ENCODE measurements at regions of chr10 and their contacts with region 1.

Region 1: GRCh38 chr10:23994479-23995046 is 214.4 kb upstream of the KIAA1217 start:
- DNase-seq: peak; percentile 15 to 52
- ATAC-seq: peak; percentile 66 to 78; a peak in 5 of 6 replicates
- H3K4me3 ChIP-seq: no peak overlapping the region
- H3K27ac ChIP-seq: no peak overlapping the region
- H3K4me1 ChIP-seq: no peaks in the 10 kb centered on the region
- CTCF ChIP-seq: peak; percentile 60
- EP300 ChIP-seq: no peak
- POLR2A ChIP-seq: no peak
- RAD21 ChIP-seq: peak; percentile 62 to 83

Region 2: GRCh38 chr10:24010436-24010970 is 15.9 kb after region 1 on chr10:
- CTCF ChIA-PET with region 1: interaction called, 20 read pairs
- POLR2A ChIA-PET with region 1: no interaction called
- DNase-seq: no peak
- ATAC-seq: no peak
- H3K4me3 ChIP-seq: no peak overlapping the region
- H3K27ac ChIP-seq: no peak overlapping the region
- H3K4me1 ChIP-seq: no peaks in the 10 kb centered on the region
- CTCF ChIP-seq: no peak
- EP300 ChIP-seq: no peak
- POLR2A ChIP-seq: no peak
- RAD21 ChIP-seq: no peak

Region 3: DNA sequence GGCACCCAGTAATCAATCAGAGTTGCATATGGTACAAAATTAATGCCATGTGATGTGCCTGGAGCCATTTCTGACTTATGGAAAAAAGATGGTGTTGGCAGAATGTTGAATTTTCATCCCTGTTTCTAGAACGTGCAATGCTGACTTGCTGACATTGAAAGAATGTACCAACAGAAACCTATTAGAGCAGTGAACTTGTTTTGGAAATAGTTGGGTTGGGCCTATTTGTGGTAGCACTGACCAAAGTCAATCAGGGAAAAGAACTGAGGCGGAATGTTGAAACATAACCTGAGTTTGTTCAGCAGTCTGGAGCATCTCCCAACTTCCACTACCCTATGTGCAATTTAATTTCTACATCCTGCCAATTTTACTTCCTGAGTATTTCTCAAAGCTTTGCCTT is 202.7 kb after region 1 on chr10:
- CTCF ChIA-PET with region 1: interaction called, 21 read pairs
- POLR2A ChIA-PET with region 1: no interaction called
- DNase-seq: no peak
- ATAC-seq: no peak
- H3K4me3 ChIP-seq: no peak overlapping the region
- H3K27ac ChIP-seq: no peak overlapping the region
- H3K4me1 ChIP-seq: no peaks in the 10 kb centered on the region
- CTCF ChIP-seq: no peak
- EP300 ChIP-seq: no peak
- POLR2A ChIP-seq: no peak
- RAD21 ChIP-seq: no peak

Region 4: DNA sequence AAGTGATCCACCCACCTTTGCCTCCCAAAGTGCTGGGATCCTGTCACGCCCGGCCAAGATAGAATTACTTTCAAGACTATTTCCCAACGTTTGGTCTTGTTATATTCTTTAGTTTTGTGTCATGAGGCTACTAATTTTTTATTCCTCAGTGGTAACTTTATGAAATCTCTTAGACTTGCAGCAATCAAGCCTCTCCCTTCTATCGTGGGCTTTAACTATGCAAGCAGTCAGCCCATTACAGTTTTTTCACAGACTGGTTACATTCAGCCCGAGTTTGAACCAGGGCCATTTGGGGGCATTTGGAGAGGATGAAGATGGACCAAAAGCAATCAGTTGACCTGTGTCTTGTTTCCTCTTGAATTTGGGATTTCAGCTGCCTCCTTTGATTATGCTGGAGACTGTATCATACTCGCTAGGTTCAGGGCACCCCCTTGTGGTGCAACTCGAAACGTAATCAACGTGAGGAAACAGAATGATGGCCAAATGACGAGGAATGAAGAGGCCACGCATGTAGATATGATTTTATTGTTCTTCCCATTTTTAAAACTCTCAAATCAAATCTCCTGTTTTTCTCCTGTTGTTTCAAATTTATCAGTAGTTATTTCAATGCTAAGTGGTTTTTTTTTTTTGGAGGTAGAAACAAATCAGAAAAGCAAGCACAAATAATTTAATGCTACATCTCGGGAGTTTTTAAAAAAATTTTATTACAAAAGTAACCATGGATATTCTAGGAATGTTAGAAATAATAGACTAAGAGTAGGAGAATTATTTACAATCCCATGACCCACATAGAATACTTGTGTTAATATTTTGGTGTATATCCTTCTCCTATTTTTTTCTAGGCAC is 365.9 kb after region 1 on chr10:
- CTCF ChIA-PET with region 1: interaction called, 28 read pairs
- POLR2A ChIA-PET with region 1: no interaction called
- DNase-seq: peak; percentile 35 to 64
- ATAC-seq: peak; percentile 81 to 93; a peak in 5 of 6 replicates
- H3K4me3 ChIP-seq: no peak overlapping the region
- H3K27ac ChIP-seq: no peak overlapping the region
- H3K4me1 ChIP-seq: no peaks in the 10 kb centered on the region
- CTCF ChIP-seq: peak; percentile 61
- EP300 ChIP-seq: no peak
- POLR2A ChIP-seq: no peak
- RAD21 ChIP-seq: peak; percentile 67 to 77

Region 5: DNA sequence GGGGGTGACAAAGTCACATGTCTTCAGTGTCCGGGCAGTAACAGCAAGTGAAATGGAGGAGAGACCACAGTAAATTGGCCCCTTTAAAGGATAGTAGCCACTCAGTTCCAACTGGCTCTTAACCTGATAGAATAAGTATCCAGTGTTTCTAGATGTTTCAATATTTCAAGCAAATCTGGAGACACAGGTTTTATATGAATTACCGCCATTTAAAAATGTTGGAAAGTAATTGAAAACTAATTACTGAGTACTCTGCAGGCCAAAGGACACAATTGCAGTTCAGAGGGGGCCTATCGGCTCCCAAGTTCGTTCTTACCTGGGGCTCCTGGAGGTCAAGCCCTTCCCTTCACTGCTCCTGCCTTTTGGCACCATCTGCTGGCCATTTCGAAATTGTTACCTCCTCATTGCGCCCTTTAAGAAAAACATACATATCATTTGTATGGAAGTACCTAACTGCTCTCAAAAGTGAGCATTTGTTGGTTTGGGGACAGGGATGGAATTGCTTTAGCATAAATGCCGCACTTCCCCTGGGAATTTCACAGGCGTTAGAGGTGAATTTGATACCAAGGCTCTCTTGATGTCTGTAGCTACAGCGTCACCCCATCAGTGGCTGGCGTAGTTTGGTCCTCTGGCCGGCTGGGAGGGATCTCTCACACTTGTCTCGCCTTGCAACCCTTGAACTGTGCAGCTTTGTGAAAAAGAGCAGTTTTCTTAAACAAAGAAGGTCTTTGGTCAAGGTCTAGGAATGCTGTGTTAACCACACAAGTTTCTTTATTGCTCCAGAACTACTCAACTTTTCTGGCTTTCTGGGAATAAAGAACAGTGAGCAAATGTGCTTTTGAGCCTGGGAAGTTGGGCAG is 509.1 kb after region 1 on chr10:
- CTCF ChIA-PET with region 1: interaction called, 26 read pairs
- POLR2A ChIA-PET with region 1: no interaction called
- DNase-seq: peak; percentile 34 to 75
- ATAC-seq: peak; percentile 90 to 93
- H3K4me3 ChIP-seq: no peak overlapping the region
- H3K27ac ChIP-seq: no peak overlapping the region
- H3K4me1 ChIP-seq: no peaks in the 10 kb centered on the region
- CTCF ChIP-seq: peak; percentile 90
- EP300 ChIP-seq: no peak
- POLR2A ChIP-seq: no peak
- RAD21 ChIP-seq: peak; percentile 93 to 94

Region 6: GRCh38 chr10:24518981-24519597 is 524.5 kb after region 1 on chr10:
- CTCF ChIA-PET with region 1: interaction called, 37 read pairs
- POLR2A ChIA-PET with region 1: no interaction called
- DNase-seq: peak; percentile 57 to 67
- ATAC-seq: peak; percentile 83 to 93
- H3K4me3 ChIP-seq: no peak overlapping the region
- H3K27ac ChIP-seq: no peak overlapping the region
- H3K4me1 ChIP-seq: no peaks in the 10 kb centered on the region
- CTCF ChIP-seq: peak; percentile 82
- EP300 ChIP-seq: no peak
- POLR2A ChIP-seq: no peak
- RAD21 ChIP-seq: peak; percentile 82 to 83

Region 7: GRCh38 chr10:24556750-24557742 is 562.5 kb after region 1 on chr10:
- CTCF ChIA-PET with region 1: interaction called, 11 read pairs
- POLR2A ChIA-PET with region 1: no interaction called
- DNase-seq: peak; percentile 44 to 80
- ATAC-seq: peak; percentile 80 to 81
- H3K4me3 ChIP-seq: no peak overlapping the region
- H3K27ac ChIP-seq: no peak overlapping the region
- H3K4me1 ChIP-seq: no peaks in the 10 kb centered on the region
- CTCF ChIP-seq: peak; percentile 74
- EP300 ChIP-seq: no peak
- POLR2A ChIP-seq: no peak
- RAD21 ChIP-seq: peak; percentile 70 to 76

Measured in A549 (cell line).